ENCODE measurements at regions of chr2 and their contacts with region 1.

Region 1: DNA sequence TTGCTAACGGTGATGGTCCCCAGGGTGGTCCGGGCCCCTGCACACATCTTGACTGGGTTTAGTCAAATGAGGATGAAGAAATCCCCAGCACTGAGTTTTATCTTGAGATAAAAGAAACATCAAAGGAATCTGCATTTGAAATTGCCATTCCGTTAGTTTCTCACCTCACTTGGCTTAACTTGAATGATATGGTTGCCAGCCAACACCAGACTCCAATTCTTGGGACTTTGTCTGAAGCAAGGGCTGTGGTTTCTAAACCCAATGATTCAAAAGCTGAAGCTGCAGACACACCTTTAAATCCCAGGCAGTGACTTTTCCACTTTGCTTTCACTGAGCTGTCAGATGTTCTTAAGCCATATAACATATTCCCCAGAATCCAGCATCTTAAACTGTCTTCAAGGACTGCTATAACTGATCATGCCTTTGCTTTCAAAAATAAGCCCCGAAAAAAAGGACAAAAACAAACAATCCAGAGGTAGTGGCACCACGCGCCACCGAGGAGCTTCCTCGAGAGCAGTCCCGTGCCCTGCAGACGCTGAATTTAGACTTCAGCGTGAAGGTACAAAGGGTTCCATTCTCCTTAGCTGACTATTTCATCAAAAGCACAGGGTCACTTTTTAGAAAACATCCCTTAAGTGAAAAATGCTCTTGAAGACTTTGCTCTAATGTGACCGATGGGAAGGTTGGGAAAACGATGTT is 189.3 kb downstream of the HDAC4 start:
- DNase-seq: peak; percentile 26
- H3K4me3 Mint-ChIP-seq: no peak overlapping the region
- H3K27ac Mint-ChIP-seq: no peak overlapping the region
- H3K4me1 Mint-ChIP-seq: peaks cover 43% of the 10 kb centered on the region
- H3K27me3 Mint-ChIP-seq: no peaks in the 10 kb centered on the region

Region 2: GRCh38 chr2:238573065-238573778 is 638.3 kb before region 1 on chr2:
- CTCF ChIA-PET with region 1: no interaction called
- intact Hi-C with region 1: no loop called
- DNase-seq: peak; percentile 28
- H3K4me3 Mint-ChIP-seq: no peak overlapping the region
- H3K27ac Mint-ChIP-seq: no peak overlapping the region
- H3K4me1 Mint-ChIP-seq: no peaks in the 10 kb centered on the region
- H3K27me3 Mint-ChIP-seq: peaks cover 3% of the 10 kb centered on the region

Region 3: GRCh38 chr2:239164335-239164871 is 47.1 kb before region 1 on chr2:
- CTCF ChIA-PET with region 1: no interaction called
- intact Hi-C with region 1: loop called (anchors 5 kb)
- DNase-seq: peak; percentile 34
- H3K4me3 Mint-ChIP-seq: no peak overlapping the region
- H3K27ac Mint-ChIP-seq: no peak overlapping the region
- H3K4me1 Mint-ChIP-seq: peaks cover 16% of the 10 kb centered on the region
- H3K27me3 Mint-ChIP-seq: no peaks in the 10 kb centered on the region